Activated T-helper 2 cell treated with anti-CD3 and anti-CD28 coated beads, Interferon-gamma antibody, Interleukin-2, Interleukin-4, amounts not matched to agents 10 μg/mL and 5 μg/mL and 100 μg/mL, durations not matched to agents 14 hours and 24 hours and 36 hours (primary cell): ENCODE measurements at regions of chr10 and their contacts with region 1.

Region 1: GRCh38 chr10:84537447-84537931 is 209.1 kb downstream of the CCSER2 start:
- DNase-seq: no peak
- H3K4me3 Mint-ChIP-seq: no peak overlapping the region
- H3K27ac Mint-ChIP-seq: no peak overlapping the region
- H3K4me1 Mint-ChIP-seq: peaks cover 19% of the 10 kb centered on the region
- H3K27me3 Mint-ChIP-seq: peaks cover 15% of the 10 kb centered on the region

Region 2: DNA sequence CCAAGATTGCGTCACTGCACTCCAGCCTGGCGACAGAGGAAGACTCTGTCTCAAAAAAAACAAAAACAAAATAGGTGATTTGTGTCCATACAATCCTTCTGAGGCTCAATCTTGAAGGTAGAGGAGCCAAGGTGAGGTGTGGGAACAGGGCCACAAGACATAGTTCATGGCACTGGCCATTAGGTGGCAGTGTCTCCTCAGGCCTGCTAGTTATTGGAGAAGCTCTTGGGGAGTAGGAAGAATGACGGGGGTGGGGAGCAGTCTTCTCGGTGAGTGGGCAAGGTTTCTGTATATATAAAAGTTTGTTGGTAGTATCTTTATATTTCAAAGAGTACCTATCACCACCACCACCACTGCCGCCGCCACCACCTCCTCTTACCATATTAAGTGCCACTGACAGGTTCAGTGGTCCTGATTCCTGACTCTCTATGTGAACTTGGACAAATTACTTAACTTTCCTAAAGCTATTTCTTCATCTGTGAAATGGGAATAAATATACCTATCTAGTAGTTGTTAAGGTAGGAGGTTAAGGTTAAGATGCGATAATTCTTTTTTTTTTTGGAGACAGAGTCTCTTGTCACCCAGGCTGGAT is 185.1 kb before region 1 on chr10:
- intact Hi-C with region 1: loop called (anchors 2 kb)
- DNase-seq: peak; percentile 29
- H3K4me3 Mint-ChIP-seq: no peak overlapping the region
- H3K27ac Mint-ChIP-seq: no peak overlapping the region
- H3K4me1 Mint-ChIP-seq: peaks cover 36% of the 10 kb centered on the region
- H3K27me3 Mint-ChIP-seq: no peaks in the 10 kb centered on the region

Region 3: GRCh38 chr10:84375011-84375410 is 162.5 kb before region 1 on chr10:
- intact Hi-C with region 1: loop called (anchors 1 kb)
- DNase-seq: no peak
- H3K4me3 Mint-ChIP-seq: no peak overlapping the region
- H3K27ac Mint-ChIP-seq: no peak overlapping the region
- H3K4me1 Mint-ChIP-seq: peaks cover 24% of the 10 kb centered on the region
- H3K27me3 Mint-ChIP-seq: no peaks in the 10 kb centered on the region

Region 4: DNA sequence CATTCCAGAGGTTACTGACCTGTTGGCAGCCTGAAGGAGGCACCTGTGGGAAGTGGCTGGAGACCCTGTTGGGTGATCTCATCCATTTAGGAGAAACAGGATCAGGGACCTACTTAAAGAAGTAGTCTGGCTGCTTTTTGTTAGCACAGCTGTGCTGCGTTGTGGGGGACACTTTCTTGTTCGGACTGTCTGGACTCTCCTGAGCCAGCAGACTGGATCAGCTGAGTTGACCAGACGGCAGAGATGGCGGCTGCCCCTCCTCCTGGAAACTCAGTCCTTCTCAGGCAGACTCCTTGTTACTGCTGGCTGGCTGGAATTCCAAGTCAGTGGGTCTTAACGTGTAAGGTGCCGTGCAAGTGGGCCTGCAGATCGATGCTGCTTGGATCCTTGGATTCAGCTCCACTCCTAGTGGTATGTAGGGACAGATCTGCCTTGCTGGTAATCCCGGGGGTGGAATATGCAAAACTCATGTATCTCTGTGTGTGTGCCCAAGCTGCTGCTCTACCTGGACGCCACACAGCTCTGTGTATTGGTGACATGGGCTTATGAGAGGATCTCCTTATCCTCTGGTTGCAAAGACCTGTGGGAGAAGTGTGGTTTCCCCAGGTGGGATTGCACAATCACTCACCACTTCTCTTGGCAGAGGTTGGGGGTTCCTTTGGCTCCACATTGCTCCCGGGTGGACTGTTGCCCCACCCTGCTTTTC is 121.8 kb before region 1 on chr10:
- intact Hi-C with region 1: no loop called
- DNase-seq: no peak
- H3K4me3 Mint-ChIP-seq: no peak overlapping the region
- H3K27ac Mint-ChIP-seq: no peak overlapping the region
- H3K4me1 Mint-ChIP-seq: no peaks in the 10 kb centered on the region
- H3K27me3 Mint-ChIP-seq: no peaks in the 10 kb centered on the region

Region 5: DNA sequence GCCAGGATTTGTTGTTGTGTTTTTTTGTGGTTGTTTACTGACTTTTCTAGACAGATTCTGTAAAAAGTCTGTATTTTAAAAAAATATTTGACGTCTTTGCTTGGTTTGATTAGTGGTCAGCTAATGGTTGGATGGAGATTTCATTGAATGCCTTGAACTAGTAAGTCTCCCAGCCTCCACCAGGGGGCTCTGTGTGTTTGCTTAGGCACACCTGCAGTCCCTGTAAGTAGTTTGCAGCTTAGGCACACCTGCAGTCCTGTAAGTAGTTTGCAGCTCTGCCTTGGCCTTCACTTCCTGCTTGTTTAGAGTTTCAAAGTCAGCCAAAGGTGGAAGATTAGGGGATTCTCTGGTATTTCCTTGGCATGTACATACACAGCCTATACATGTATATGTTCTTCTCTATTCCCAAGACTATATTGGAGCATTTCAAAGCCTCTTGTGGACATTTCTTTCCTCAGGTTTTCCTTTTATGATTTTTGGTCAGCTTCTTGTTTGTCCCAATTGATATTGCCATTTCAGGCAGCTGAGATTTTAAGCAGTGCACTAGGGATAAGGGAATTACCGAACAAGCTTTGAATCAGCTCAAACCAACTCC is 107.5 kb before region 1 on chr10:
- intact Hi-C with region 1: loop called (anchors 1 kb)
- DNase-seq: peak; percentile 29
- H3K4me3 Mint-ChIP-seq: no peak overlapping the region
- H3K27ac Mint-ChIP-seq: no peak overlapping the region
- H3K4me1 Mint-ChIP-seq: peaks cover 7% of the 10 kb centered on the region
- H3K27me3 Mint-ChIP-seq: no peaks in the 10 kb centered on the region

Region 6: GRCh38 chr10:84715911-84716310 is 178.4 kb after region 1 on chr10:
- intact Hi-C with region 1: loop called (anchors 2 kb)
- DNase-seq: no peak
- H3K4me3 Mint-ChIP-seq: no peak overlapping the region
- H3K27ac Mint-ChIP-seq: no peak overlapping the region
- H3K4me1 Mint-ChIP-seq: no peaks in the 10 kb centered on the region
- H3K27me3 Mint-ChIP-seq: peaks cover 1% of the 10 kb centered on the region

Region 7: DNA sequence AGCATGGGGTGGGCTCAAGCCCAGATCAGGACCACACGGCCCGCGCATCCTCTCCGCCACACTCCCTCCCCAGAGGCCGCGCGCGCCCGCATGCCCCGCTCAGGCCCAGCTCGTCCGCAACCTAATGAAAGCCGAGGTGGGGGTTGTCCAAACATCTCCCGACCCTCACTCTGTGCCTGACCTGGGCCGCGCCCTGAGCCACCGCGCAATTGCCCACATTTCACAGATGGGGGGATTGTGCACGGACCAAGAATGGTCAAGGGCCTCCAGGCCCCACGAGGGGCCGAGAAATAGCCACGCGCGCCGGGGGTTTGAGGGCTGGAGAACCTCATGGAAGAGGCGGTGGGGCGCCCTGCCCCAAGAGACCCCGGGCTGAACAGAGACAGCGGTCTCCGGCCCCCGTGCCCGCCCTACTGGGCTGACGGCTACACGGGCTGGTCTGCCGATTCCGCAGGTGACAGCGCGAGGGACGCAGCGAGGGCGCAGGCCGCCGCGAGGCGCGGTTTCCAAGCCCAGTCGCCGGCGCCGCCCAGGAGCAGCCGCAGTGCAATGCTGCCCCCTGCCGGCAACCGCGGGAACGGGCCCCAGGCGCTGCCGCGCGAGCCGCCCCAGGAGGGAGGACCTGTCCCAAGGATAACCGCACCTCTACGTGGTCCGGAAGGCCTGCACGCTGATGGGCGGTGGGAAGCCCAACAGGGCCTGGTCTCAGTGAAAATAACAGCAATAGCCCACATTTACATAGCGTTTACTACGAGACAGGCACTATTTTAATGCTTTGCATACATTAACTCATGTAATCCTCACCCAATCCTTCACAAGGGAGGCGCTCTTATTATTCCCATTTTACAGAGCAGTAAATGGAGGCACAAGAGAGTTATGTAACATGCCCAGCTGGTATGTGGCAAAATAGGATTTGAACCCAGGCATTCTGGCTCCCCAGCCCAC is 1839.6 kb after region 1 on chr10:
- intact Hi-C with region 1: loop called (anchors 10 kb)
- DNase-seq: peak; percentile 72
- H3K4me3 Mint-ChIP-seq: no peak overlapping the region
- H3K27ac Mint-ChIP-seq: no peak overlapping the region
- H3K4me1 Mint-ChIP-seq: no peaks in the 10 kb centered on the region
- H3K27me3 Mint-ChIP-seq: peaks cover 56% of the 10 kb centered on the region